ENCODE measurements at regions of chr6 and their contacts with region 1.

Region 1: DNA sequence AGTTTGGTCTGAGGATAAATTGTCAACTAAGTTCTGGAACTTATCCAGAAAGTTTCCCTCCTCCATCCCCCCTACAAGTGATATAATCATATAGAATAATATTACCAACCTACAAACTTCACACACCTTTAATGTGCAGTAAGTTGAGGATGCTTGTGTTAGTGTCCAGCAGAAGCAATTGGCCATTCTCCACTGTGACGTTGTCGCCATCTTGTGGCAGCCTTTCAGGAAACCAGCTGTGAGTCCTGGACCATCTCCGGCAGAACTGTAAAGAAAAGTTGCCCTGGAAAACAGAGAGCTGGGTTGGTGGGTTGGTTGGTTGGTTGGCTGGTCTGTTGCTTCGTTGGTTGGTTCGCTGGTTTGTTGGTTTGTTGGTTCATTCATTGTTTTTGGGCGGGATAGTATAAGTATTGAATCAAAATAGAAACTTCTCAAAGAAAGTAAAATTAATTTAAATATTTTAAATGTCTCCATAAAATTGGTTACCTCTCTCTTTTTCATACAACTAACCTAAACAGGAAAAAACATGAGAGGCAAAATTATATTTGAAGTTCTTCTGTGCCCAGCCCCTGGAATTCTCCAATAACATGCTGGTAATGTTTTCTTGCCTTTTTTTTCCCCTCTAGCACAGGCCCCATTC is 127.5 kb downstream of the PKHD1 start:
- DNase-seq: peak; percentile 91
- ATAC-seq: peak; percentile 93
- H3K4me3 ChIP-seq: no peak overlapping the region
- H3K27ac ChIP-seq: no peak overlapping the region
- H3K4me1 ChIP-seq: 0 out of 2 replicates have a peak, but pooled peaks cover 3% of the 10 kb centered on the region
- H3K27me3 ChIP-seq: no peaks in the 10 kb centered on the region
- CTCF ChIP-seq: peak; percentile 96

Region 2: DNA sequence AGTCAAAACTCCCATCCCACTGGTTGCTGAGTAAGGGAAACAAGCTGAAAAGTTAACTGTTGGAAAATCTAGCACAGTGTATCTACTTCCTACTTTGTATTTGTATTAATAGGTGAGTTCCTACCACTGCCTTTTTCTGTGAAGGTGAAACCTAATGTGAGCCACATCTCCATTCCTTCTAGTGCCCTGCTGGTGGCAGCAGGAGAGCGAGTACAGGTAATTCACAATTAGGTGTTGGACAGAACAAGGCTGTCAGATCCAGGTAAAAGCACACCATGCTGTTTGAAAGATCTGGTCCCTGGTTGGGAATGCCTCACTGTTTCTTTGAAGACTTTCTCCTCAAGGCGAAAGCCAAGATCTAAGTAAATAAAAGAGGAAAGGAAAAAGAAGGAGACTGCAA is 400.8 kb before region 1 on chr6:
- CTCF ChIA-PET with region 1: no interaction called
- POLR2A ChIA-PET with region 1: no interaction called
- intact Hi-C with region 1: loop called (anchors 1 kb)
- DNase-seq: peak; percentile 69
- ATAC-seq: peak; percentile 84
- H3K4me3 ChIP-seq: no peak overlapping the region
- H3K27ac ChIP-seq: no peak overlapping the region
- H3K4me1 ChIP-seq: no peaks in the 10 kb centered on the region
- H3K27me3 ChIP-seq: peaks cover 3% of the 10 kb centered on the region; the same call in 1 of the 2 replicates
- CTCF ChIP-seq: peak; percentile 90

Region 3: DNA sequence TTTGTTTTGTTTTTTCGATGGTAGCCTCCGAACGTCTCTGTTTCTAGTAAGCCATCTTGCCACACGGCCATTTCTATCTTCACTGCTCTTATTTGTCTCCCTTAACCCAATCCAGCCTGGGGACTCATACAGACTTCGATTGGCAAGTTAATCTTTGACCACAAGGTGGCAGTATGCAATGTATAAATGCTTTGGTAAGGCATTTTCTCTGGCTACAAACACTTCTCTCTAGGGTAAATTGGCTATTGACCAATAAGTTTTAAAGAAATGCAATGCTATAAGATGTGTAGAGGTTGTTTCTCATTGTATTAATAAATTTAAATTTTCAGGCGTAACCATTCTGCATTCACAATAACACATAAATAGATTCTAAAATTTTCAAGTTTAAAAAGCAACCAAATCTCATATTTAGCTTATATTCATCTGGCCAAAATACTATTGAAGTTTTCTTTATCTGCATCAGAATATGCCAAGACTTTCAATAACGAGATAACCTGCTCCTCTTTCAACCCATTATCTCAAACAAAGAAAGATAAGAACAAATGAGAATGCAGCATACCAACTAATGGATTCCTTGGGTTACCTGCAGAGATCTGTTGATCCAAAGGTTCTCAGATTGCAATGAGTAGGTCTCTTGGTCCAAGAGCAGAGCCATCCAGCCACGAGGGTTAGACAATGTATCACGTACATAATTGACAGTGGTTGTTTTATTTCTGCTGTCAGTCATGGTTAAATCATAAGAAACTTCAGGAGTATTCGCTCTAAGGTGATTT is 104.4 kb before region 1 on chr6:
- CTCF ChIA-PET with region 1: interaction called, 8 read pairs
- POLR2A ChIA-PET with region 1: no interaction called
- intact Hi-C with region 1: loop called (anchors 1 kb)
- DNase-seq: peak; percentile 94
- ATAC-seq: peak; percentile 59
- H3K4me3 ChIP-seq: no peak overlapping the region
- H3K27ac ChIP-seq: peak overlapping the region; percentile 86; the same call in 1 of the 2 replicates
- H3K4me1 ChIP-seq: peaks cover 31% of the 10 kb centered on the region
- H3K27me3 ChIP-seq: no peaks in the 10 kb centered on the region
- CTCF ChIP-seq: peak; percentile 92

Region 4: DNA sequence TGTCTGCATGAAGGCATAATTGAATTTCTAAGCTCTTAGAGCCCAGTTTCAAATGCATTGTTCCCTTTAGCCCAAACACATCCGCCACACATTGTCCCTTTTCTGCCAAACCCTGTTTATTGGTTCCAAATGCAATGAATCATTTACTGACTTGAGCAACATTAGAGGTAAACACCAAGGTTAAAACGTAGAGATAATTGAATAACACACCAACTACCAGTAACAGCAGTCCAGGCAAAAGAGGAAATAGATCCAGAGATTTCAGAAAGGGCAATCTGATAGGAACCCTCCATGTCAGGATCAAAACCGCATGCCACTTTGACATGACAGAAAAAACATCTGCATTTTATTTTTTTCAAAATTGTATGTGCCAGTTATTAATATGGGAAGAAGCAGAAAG is 12.8 kb after region 1 on chr6:
- CTCF ChIA-PET with region 1: no interaction called
- POLR2A ChIA-PET with region 1: no interaction called
- intact Hi-C with region 1: no loop called
- DNase-seq: peak; percentile 21
- ATAC-seq: no peak
- H3K4me3 ChIP-seq: no peak overlapping the region
- H3K27ac ChIP-seq: no peak overlapping the region
- H3K4me1 ChIP-seq: no peaks in the 10 kb centered on the region
- H3K27me3 ChIP-seq: no peaks in the 10 kb centered on the region
- CTCF ChIP-seq: no peak

Measured in PC-3 (cell line).